ENCODE measurements at regions of chr6 and their contacts with region 1.

Region 1: DNA sequence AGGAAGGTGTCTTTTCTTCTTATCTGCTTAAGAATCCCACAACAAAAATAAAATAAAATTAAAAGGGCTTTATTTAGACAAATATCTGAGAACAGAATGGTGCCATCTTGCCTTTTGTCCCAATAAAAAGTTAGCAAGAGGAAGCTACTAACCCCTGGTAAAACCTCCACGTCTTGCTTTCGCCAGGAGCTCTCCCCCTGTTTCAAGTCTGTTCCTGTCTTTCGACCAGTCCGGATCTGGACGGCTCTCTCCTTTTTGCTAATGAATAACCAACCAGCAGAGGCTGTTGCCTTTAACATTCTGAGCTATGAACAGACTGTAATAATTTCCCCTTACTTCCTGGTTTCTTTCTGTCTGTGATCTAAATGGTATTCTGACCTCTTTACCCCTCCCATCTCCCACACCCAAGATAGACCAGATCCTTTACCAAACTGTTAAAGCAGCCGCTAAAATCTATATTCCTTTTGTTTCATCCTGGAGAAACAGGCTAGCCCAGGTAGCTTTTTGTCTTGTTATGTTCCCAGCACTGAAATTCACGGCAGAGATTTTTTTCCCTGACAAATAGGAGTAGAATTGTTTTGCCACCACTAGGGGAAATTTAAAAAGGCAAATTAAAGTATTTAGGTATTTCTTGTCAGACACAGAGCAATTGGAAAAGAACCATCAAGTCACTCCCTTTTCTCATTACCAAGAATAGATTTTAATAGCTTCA is at the start of gene FRK:
- DNase-seq: peak; percentile 92
- H3K4me3 ChIP-seq: peak within 1 kb of the TSS; percentile 44 to 69 (median 61)
- H3K27ac ChIP-seq: peak within 1 kb of the TSS; percentile 84
- H3K4me1 ChIP-seq: peaks cover 12% of the 10 kb centered on the region
- H3K27me3 ChIP-seq: no peaks in the 10 kb centered on the region
- CTCF ChIP-seq: peak; percentile 34 to 40
- total RNA-seq, gene FRK: 3.2 to 6.2 TPM

Region 2: DNA sequence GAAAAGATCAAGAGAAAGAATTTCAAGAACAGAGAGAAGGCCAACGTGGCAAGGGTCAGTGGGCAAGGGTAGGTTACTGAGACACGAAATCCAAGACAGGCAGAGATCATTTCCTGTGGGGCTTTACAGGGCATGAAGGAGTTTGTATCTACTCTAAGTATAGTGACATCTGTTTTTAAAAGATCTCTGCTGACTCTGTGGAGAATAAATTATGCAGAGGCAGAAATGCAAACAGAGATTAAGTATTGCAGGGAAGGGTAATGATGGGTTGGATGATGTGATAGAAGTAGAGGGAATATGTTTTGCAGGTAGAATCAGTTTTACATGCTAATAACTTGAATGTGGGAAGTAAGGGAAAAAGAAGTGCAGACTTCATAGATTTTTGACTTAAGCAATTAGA is 243.6 kb before region 1 on chr6:
- CTCF ChIA-PET with region 1: no interaction called
- dilution Hi-C with region 1: no loop called
- in situ Hi-C with region 1: no loop called
- intact Hi-C with region 1: no loop called
- DNase-seq: no peak
- H3K4me3 ChIP-seq: no peak overlapping the region
- H3K27ac ChIP-seq: no peak overlapping the region
- H3K4me1 ChIP-seq: no peaks in the 10 kb centered on the region
- H3K27me3 ChIP-seq: no peaks in the 10 kb centered on the region
- CTCF ChIP-seq: no peak

Region 3: GRCh38 chr6:116010790-116011401 is 49.8 kb before region 1 on chr6:
- CTCF ChIA-PET with region 1: interaction called, 20 read pairs
- dilution Hi-C with region 1: no loop called
- in situ Hi-C with region 1: no loop called
- intact Hi-C with region 1: loop called (anchors 1 kb)
- DNase-seq: peak; percentile 58
- H3K4me3 ChIP-seq: no peak overlapping the region
- H3K27ac ChIP-seq: peak overlapping the region; percentile 73
- H3K4me1 ChIP-seq: peaks cover 47% of the 10 kb centered on the region
- H3K27me3 ChIP-seq: no peaks in the 10 kb centered on the region
- CTCF ChIP-seq: peak; percentile 76 to 91

Region 4: DNA sequence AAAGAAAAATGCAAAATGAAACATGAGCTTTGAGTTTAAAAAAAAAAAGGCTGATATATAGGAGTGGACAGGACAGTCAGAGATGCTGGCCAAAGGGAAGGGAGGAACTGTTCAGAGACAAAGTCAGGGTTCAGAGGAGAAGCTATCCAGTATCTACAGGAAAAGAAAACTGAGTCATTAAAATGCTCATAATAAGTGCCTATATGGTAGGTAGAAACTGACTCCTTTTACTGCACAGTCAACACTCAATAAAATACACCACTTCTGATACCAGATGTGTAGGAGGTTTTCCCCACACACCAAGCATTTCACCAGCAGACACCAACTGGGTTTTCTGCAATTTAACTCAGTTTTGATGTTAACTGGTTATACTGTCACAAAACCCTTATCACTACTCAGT is 32.9 kb before region 1 on chr6:
- CTCF ChIA-PET with region 1: interaction called, 10 read pairs
- dilution Hi-C with region 1: no loop called
- in situ Hi-C with region 1: no loop called
- intact Hi-C with region 1: no loop called
- DNase-seq: peak; percentile 35
- H3K4me3 ChIP-seq: no peak overlapping the region
- H3K27ac ChIP-seq: no peak overlapping the region
- H3K4me1 ChIP-seq: peaks cover 9% of the 10 kb centered on the region
- H3K27me3 ChIP-seq: no peaks in the 10 kb centered on the region
- CTCF ChIP-seq: no peak

Measured in mammary epithelial cell (primary cell).